WTC11 (cell line): ENCODE measurements at regions of chr10 and their contacts with region 1.

Region 1: DNA sequence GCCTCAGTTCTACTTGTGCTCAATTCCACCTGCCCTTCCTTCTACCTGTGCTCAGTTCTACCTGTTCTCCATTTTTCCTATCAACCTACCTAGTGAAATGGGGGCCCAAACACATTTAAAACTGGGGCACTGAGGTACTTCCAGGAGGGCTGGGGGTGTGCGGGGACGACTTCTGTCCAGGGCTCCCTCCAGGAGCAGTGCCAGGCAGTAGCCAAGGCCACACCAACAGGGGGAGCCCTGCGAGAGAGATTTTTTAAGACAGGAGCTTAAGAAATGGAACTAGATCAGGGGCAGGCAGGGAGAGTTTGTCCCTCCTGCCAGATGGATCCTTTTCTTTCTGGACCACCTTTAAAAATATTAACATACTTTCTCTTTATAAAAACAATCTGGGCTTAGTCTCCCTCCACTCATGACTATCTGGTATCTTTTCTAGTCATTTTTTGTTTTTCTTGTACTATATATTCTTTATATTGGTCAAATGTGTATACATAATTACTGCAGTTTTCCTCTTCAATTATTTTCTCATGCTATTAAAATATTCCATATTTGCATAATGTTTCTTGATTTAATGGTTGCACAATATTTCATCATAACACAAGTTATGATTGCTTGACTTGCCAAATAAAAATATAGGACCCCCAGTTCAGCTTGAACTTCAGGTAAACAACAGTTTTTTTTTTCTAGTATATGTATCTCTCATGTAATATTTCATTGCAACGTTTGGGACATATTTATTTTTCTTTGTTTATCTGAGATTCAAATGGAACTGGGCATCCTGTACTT is 47.3 kb upstream of the INSYN2A start:
- DNase-seq: peak; percentile 79
- ATAC-seq: peak; percentile 98
- H3K4me3 Mint-ChIP-seq: no peak overlapping the region
- H3K27ac Mint-ChIP-seq: no peak overlapping the region
- H3K4me1 Mint-ChIP-seq: no peaks in the 10 kb centered on the region; the same call in 1 of the 2 replicates
- H3K27me3 Mint-ChIP-seq: no peaks in the 10 kb centered on the region
- CTCF ChIP-seq: peak; percentile 58

Region 2: GRCh38 chr10:127046975-127047877 is 196.5 kb before region 1 on chr10:
- CTCF ChIA-PET with region 1: no interaction called
- POLR2A ChIA-PET with region 1: no interaction called
- DNase-seq: no peak
- ATAC-seq: no peak
- H3K4me3 Mint-ChIP-seq: no peak overlapping the region
- H3K27ac Mint-ChIP-seq: no peak overlapping the region
- H3K4me1 Mint-ChIP-seq: no peaks in the 10 kb centered on the region
- H3K27me3 Mint-ChIP-seq: no peaks in the 10 kb centered on the region
- CTCF ChIP-seq: no peak

Region 3: GRCh38 chr10:127196230-127196954 is 47.3 kb before region 1 on chr10 and contains the start of gene INSYN2A:
- CTCF ChIA-PET with region 1: interaction called, 11 read pairs
- POLR2A ChIA-PET with region 1: no interaction called
- DNase-seq: peak; percentile 67
- ATAC-seq: peak; percentile 72
- H3K4me3 Mint-ChIP-seq: peak within 1 kb of the TSS; percentile 75
- H3K27ac Mint-ChIP-seq: no peak within 1 kb of the TSS
- H3K4me1 Mint-ChIP-seq: peaks cover 24% of the 10 kb centered on the region
- H3K27me3 Mint-ChIP-seq: peaks cover 36% of the 10 kb centered on the region
- CTCF ChIP-seq: no peak
- total RNA-seq, gene INSYN2A: 0.13 to 0.23 TPM (median 0.21 TPM) in 3 replicates

Region 4: DNA sequence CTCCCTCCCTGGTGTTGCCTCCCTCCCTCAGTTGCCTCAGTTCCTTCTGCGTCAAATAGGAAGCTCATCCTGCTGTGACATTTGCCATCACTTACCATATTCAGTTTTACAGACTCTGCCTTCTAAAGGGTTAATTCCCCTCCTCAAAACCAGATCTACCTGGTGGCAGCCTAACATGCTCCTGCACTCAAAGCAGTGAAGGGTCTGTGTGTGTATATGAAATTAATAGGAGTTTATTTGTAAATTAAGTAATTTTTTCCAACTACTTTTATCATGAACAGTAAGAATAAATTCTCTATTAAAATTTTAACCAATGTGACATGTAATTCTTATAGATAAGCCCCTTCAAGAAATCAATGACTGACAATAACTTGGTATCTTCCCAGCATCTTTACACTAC is 111.3 kb after region 1 on chr10:
- CTCF ChIA-PET with region 1: interaction called, 16 read pairs
- POLR2A ChIA-PET with region 1: no interaction called
- DNase-seq: no peak
- ATAC-seq: peak; percentile 39; the same call in 1 of the 2 replicates
- H3K4me3 Mint-ChIP-seq: no peak overlapping the region
- H3K27ac Mint-ChIP-seq: no peak overlapping the region
- H3K4me1 Mint-ChIP-seq: peaks cover 13% of the 10 kb centered on the region
- H3K27me3 Mint-ChIP-seq: no peaks in the 10 kb centered on the region
- CTCF ChIP-seq: peak; percentile 26